Activated naive CD4-positive, alpha-beta T cell treated with anti-CD3 and anti-CD28 coated beads for 36 hours (primary cell): ENCODE measurements at regions of chr16 and their contacts with region 1.

Region 1: DNA sequence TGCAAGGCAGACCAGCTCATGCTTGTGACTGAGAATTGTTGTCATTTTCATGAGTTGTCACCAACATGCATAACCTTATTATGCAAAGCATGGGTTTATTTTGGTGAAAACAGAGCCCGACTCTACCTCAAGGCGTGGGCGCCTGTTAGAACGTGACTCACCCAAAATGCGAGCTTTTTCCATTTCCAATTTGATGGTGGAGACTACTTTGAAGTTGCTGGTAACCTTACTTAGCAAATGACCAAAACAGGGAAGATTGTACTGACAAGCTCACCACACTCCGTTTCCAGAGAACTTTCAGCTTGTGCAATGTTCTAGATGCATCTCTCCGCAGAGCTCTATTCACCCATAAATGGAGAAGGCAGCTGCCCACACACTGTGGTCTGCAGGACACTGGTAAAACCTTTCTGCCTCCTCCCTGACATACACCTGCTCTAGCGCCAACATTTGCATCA is 284.5 kb downstream of the MAF start:
- DNase-seq: peak; percentile 69
- H3K4me3 Mint-ChIP-seq: no peak overlapping the region
- H3K27ac Mint-ChIP-seq: peak overlapping the region; percentile 25
- H3K4me1 Mint-ChIP-seq: peaks cover 15% of the 10 kb centered on the region
- H3K27me3 Mint-ChIP-seq: peaks cover 21% of the 10 kb centered on the region

Region 2: GRCh38 chr16:79021991-79022630 is 293.9 kb before region 1 on chr16:
- CTCF ChIA-PET with region 1: no interaction called
- intact Hi-C with region 1: no loop called
- DNase-seq: no peak
- H3K4me3 Mint-ChIP-seq: no peak overlapping the region
- H3K27ac Mint-ChIP-seq: no peak overlapping the region
- H3K4me1 Mint-ChIP-seq: no peaks in the 10 kb centered on the region
- H3K27me3 Mint-ChIP-seq: no peaks in the 10 kb centered on the region

Region 3: DNA sequence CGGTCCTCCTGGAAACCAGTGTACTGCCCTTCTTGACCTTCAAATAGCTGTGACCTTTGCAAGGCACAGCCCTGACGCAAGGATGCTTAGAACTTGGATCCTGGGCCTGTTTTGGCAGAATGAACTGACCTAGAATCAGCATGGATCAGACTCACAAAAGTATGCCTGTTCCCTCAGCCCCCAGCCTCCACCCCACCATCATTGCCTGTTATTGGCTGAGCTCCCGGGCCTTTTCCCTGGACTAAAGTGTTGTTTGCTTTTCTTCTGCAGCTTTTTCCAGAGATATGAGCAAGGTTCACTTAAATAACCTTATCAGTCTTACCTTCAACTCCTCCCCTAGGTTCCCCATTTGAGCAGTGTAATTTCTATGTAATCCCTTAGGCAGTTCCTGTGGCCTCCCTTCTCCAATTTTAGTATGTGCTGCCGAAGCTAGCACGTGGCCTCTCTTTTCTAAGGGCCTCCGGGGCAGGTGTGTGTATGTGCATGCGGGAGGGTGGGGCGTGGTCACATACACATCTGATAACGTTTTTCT is 62.9 kb before region 1 on chr16:
- CTCF ChIA-PET with region 1: no interaction called
- intact Hi-C with region 1: no loop called
- DNase-seq: no peak
- H3K4me3 Mint-ChIP-seq: no peak overlapping the region
- H3K27ac Mint-ChIP-seq: no peak overlapping the region
- H3K4me1 Mint-ChIP-seq: no peaks in the 10 kb centered on the region
- H3K27me3 Mint-ChIP-seq: peaks cover 4% of the 10 kb centered on the region

Region 4: DNA sequence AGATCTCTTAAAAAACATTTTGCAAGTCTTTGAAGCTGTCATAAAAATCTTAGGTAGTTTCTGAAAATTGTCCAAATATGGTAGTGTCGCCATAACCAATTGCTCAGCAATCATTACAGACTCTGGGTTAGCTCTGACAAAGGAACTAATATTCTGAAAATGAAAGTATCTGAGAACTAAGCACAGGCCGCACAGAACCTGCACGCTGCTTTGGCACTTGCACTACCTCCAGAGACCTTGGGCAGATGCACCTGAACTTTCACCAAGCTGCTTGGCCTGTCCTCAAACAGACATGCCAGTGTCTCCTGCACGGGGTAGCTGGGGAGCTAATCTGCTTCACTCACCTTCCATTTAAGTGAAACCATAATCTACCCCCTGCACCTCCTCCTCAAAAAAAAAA is 32.5 kb before region 1 on chr16:
- CTCF ChIA-PET with region 1: no interaction called
- intact Hi-C with region 1: loop called (anchors 2 kb)
- DNase-seq: peak; percentile 39
- H3K4me3 Mint-ChIP-seq: no peak overlapping the region
- H3K27ac Mint-ChIP-seq: no peak overlapping the region
- H3K4me1 Mint-ChIP-seq: peaks cover 71% of the 10 kb centered on the region
- H3K27me3 Mint-ChIP-seq: peaks cover 8% of the 10 kb centered on the region

Region 5: GRCh38 chr16:79363035-79363434 is 47.0 kb after region 1 on chr16:
- CTCF ChIA-PET with region 1: no interaction called
- intact Hi-C with region 1: loop called (anchors 1 kb)
- DNase-seq: peak; percentile 10
- H3K4me3 Mint-ChIP-seq: no peak overlapping the region
- H3K27ac Mint-ChIP-seq: no peak overlapping the region
- H3K4me1 Mint-ChIP-seq: peaks cover 10% of the 10 kb centered on the region
- H3K27me3 Mint-ChIP-seq: peaks cover 16% of the 10 kb centered on the region